ENCODE measurements at regions of chr1 and their contacts with region 1.

Region 1: GRCh38 chr1:156146020-156146768 is 7.2 kb upstream of the SEMA4A start:
- DNase-seq: peak; percentile 64
- H3K4me3 Mint-ChIP-seq: peak overlapping the region; percentile 50
- H3K27ac Mint-ChIP-seq: peak overlapping the region; percentile 81
- H3K4me1 Mint-ChIP-seq: peaks cover 35% of the 10 kb centered on the region
- H3K27me3 Mint-ChIP-seq: no peaks in the 10 kb centered on the region

Region 2: GRCh38 chr1:156160743-156161171 is 14.6 kb after region 1 on chr1:
- CTCF ChIA-PET with region 1: interaction called, 6 read pairs
- POLR2A ChIA-PET with region 1: interaction called, 5 read pairs
- intact Hi-C with region 1: loop called (anchors 1 kb)
- DNase-seq: peak; percentile 90
- H3K4me3 Mint-ChIP-seq: peak overlapping the region; percentile 74
- H3K27ac Mint-ChIP-seq: peak overlapping the region; percentile 93
- H3K4me1 Mint-ChIP-seq: peaks cover 82% of the 10 kb centered on the region
- H3K27me3 Mint-ChIP-seq: no peaks in the 10 kb centered on the region

Region 3: DNA sequence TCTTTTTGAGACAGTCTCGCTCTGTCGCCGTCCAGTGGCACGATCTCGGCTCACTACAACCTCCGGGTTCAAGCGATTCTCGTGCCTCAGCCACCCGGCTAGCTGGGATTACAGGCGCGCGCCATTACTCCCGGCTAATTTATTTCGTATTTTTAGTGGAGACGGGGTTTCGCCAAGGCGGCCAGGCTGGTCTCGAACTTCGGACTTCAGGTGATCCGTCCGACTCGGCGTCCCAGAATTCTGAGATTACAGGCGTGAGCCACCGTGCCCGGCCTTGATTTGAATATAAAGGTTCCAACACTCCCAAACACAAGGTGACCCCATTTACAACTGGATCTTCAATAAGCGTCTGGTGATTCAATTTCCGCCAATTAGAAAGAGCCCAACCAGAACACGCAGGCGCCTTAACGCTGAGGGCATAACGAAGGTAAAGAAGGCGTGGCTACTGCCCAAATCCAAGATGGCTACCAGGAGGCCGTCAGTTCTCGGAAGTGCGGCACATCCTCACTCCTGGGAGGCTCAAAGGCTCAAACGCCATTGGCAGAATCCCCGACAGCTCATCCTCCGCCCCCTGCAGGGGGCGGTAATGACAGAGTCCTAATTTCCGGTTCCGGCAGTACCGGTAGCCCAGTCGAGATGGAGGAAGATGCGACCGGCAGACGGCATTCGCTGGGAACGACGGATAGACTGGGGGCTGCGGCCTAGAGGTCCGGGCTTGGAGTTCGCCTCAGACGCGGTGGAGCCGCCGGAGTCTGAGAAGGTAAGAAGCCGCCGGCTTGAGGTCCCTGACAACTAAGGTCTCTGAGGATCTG is 47.5 kb after region 1 on chr1 and contains the start of gene SLC25A44:
- CTCF ChIA-PET with region 1: interaction called, 5 read pairs
- POLR2A ChIA-PET with region 1: interaction called, 5 read pairs
- intact Hi-C with region 1: loop called (anchors 1 kb)
- DNase-seq: peak; percentile 99
- H3K4me3 Mint-ChIP-seq: peak within 1 kb of the TSS; percentile 100
- H3K27ac Mint-ChIP-seq: peak within 1 kb of the TSS; percentile 81
- H3K4me1 Mint-ChIP-seq: peaks cover 61% of the 10 kb centered on the region
- H3K27me3 Mint-ChIP-seq: no peaks in the 10 kb centered on the region
- total RNA-seq, gene SLC25A44: 61.3 to 62.2 TPM

Region 4: DNA sequence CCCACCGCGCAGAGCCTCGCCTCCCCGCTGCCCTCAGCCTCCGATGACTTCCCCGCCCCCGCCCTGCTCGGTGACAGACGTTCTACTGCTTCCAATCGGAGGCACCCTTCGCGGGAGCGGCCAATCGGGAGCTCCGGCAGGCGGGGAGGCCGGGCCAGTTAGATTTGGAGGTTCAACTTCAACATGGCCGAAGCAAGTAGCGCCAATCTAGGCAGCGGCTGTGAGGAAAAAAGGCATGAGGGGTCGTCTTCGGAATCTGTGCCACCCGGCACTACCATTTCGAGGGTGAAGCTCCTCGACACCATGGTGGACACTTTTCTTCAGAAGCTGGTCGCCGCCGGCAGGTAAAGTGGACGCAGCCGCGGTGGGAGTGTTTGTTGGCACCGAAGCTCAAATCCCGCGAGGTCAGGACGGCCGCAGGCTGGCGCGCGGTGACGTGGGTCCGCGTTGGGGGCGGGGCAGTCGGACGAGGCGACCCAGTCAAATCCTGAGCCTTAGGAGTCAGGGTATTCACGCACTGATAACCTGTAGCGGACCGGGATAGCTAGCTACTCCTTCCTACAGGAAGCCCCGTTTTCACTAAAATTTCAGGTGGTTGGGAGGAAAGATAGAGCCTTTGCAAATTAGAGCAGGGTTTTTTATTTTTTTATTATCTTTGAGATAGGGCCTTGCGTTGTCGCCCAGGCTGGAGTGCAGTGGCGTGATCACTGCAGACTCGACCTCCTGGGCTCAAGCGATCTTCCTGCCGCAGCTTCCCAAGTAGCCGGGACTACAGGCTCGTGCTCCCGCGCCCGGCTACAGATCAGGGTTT is 66.8 kb after region 1 on chr1 and contains the start of gene PMF1:
- CTCF ChIA-PET with region 1: interaction called, 11 read pairs
- POLR2A ChIA-PET with region 1: interaction called, 18 read pairs
- intact Hi-C with region 1: no loop called
- DNase-seq: peak; percentile 98
- H3K4me3 Mint-ChIP-seq: peak within 1 kb of the TSS; percentile 76
- H3K27ac Mint-ChIP-seq: peak within 1 kb of the TSS; percentile 96
- H3K4me1 Mint-ChIP-seq: peaks cover 40% of the 10 kb centered on the region
- H3K27me3 Mint-ChIP-seq: no peaks in the 10 kb centered on the region
- total RNA-seq, gene PMF1: 99.5 to 105 TPM

Region 5: GRCh38 chr1:156319664-156320063 is 173.5 kb after region 1 on chr1:
- CTCF ChIA-PET with region 1: interaction called, 9 read pairs
- POLR2A ChIA-PET with region 1: no interaction called
- intact Hi-C with region 1: loop called (anchors 1 kb)
- DNase-seq: no peak
- H3K4me3 Mint-ChIP-seq: no peak overlapping the region
- H3K27ac Mint-ChIP-seq: no peak overlapping the region
- H3K4me1 Mint-ChIP-seq: no peaks in the 10 kb centered on the region
- H3K27me3 Mint-ChIP-seq: no peaks in the 10 kb centered on the region

Region 6: GRCh38 chr1:156338180-156338973 is 192.2 kb after region 1 on chr1 and contains the starts of genes CCT3 and TSACC:
- CTCF ChIA-PET with region 1: no interaction called
- POLR2A ChIA-PET with region 1: no interaction called
- intact Hi-C with region 1: loop called (anchors 5 kb)
- DNase-seq: peak; percentile 99
- H3K4me3 Mint-ChIP-seq: peak within 1 kb of the TSS; percentile 90
- H3K27ac Mint-ChIP-seq: peak within 1 kb of the TSS; percentile 95
- H3K4me1 Mint-ChIP-seq: peaks cover 27% of the 10 kb centered on the region
- H3K27me3 Mint-ChIP-seq: no peaks in the 10 kb centered on the region
- total RNA-seq, gene CCT3: 344 to 356 TPM
- total RNA-seq, gene TSACC: not detected